Lower leg skin (tissue), 4 donors: ENCODE measurements at regions of chr18 and their contacts with region 1.

Region 1: DNA sequence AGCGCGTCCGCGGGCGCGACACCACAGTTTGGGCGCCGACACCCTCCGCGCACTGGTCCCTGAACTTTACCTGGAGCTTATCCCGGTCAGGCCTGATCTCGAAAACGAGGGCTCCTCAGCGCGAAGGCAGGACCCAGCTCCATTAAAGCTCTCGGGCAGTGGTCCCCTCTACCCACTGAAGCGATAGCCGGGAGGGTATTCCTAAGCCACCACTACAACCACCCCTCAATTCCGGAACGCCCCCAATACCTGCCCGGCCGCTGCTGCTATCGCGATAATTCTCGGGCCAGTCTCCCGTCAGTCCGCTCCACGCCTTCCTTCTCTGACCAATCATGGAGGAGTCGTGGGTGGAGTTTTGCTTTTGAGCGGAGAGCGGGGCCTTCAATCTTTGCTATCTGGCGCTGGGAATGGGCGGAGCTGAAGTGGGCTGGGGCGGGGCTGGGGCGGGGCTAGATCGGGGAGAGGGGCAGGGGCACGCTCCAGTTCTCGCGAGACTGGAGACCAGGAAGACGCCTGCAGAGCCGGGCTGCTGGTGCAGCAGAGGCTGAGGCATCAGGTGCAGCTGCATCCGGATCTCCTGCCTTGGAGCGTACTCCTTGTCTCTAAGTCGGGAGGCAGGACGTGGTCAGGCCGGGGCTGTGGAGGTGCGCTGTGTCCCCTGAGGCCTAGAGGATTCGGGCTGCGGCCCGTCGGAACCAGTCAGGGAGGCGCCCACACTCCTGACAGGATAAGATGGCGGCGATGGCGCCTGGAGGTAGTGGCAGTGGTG is at the starts of genes PIGN and RELCH:
- DNase-seq: peak; percentile 97 to 98
- H3K4me3 ChIP-seq: peak within 1 kb of the TSS; percentile 100
- CTCF ChIP-seq: no peak
- POLR2A ChIP-seq: peak in 1 of 2 donors; percentile 11
- total RNA-seq, gene PIGN: 23.6 to 35.6 (median 31.7) TPM
- total RNA-seq, gene RELCH: 46.7 to 77.9 (median 55.0) TPM

Region 2: DNA sequence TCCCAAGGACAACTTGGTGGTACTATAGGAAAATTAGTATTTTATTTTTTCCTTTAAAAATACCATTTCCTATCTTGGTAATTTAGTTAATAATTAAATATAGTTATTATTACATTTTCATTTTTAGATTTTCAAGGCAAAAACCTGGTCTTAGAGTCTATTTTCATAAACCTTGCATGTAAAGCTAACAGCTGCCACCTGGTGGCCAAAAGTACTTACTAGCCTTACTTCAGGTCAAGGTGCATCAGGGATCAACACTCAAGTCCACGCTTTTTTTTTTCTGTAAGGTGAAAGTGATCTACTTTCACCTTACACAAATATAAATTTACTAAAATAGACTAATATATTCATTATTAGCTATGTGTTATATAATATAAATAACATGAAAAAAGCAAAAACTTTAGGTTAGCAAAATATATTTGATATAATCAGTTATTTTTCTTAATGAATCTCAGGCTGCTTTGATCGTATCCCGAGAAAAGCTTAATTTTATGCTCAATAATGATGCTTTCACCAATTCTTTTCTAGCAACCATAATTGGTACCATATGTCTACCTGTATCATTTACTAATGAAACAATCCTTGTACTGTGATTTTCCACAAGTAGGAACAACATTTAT is 62.6 kb after region 1 on chr18:
- intact Hi-C with region 1: loop called (anchors 10 kb)
- DNase-seq: peak; percentile 70 to 86
- H3K4me3 ChIP-seq: no peak overlapping the region
- CTCF ChIP-seq: no peak
- POLR2A ChIP-seq: no peak

Region 3: GRCh38 chr18:62420513-62421209 is 233.7 kb after region 1 on chr18:
- intact Hi-C with region 1: no loop called
- DNase-seq: peak in 1 of 2 donors; percentile 76
- H3K4me3 ChIP-seq: no peak overlapping the region
- CTCF ChIP-seq: no peak
- POLR2A ChIP-seq: no peak

Region 4: DNA sequence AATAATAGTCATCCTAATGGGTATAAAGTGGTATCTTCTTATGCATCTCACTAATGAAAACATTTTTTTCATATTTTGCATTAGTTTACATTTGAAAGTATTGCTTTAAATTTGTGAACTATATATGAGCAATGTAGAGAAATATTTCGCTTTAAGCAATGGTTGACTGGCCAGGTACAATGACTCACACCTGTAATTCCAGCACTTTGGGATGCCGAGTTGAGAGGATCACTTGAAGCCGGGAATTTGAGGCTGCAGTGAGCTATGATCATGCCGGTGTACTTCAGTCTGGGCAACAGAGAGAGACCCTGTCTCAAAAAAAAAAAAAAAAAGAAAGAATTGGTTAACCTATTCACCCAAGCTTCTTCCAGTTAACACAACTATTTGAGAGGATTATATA is 351.0 kb after region 1 on chr18:
- intact Hi-C with region 1: no loop called
- DNase-seq: no peak
- H3K4me3 ChIP-seq: no peak overlapping the region
- CTCF ChIP-seq: no peak
- POLR2A ChIP-seq: no peak